ENCODE measurements at regions of chr3 and their contacts with region 1.

Region 1: GRCh38 chr3:12175844-12176453 is 17.2 kb upstream of the TIMP4 start:
- DNase-seq: peak in 1 of 2 experiments; percentile 78
- H3K4me3 ChIP-seq: no peak overlapping the region
- H3K27ac ChIP-seq: no peak overlapping the region
- H3K4me1 ChIP-seq: no peaks in the 10 kb centered on the region
- H3K27me3 ChIP-seq: no peaks in the 10 kb centered on the region
- CTCF ChIP-seq: peak; percentile 88 to 91 (median 91)
- EP300 ChIP-seq: no peak
- POLR2A ChIP-seq: no peak
- RAD21 ChIP-seq: peak; percentile 94 to 96

Region 2: DNA sequence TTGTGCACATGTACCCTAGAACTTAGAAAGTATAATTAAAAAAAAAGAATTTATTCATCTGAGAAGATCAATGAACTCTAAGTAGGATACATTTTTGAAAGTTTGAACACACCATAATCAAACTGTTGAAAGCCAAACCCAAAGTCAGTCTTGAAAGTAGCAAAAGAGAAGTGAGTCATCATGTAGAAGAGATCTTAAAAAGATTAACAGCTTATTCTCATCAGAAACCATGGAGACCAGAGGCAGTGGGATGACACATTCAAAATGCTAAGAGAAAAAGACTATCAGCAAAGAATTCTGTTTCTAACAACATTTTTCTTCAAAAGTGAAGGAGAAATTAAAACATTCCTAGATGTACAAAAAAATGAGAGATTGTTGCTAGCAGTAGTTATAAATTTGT is 78.0 kb before region 1 on chr3:
- CTCF ChIA-PET with region 1: no interaction called
- POLR2A ChIA-PET with region 1: no interaction called
- DNase-seq: no peak
- H3K4me3 ChIP-seq: no peak overlapping the region
- H3K27ac ChIP-seq: no peak overlapping the region
- H3K4me1 ChIP-seq: no peaks in the 10 kb centered on the region
- H3K27me3 ChIP-seq: no peaks in the 10 kb centered on the region
- CTCF ChIP-seq: no peak
- EP300 ChIP-seq: no peak
- POLR2A ChIP-seq: no peak
- RAD21 ChIP-seq: no peak

Region 3: GRCh38 chr3:12186515-12187286 is 10.8 kb after region 1 on chr3:
- CTCF ChIA-PET with region 1: interaction called, 54 read pairs
- POLR2A ChIA-PET with region 1: no interaction called
- DNase-seq: no peak
- H3K4me3 ChIP-seq: no peak overlapping the region
- H3K27ac ChIP-seq: no peak overlapping the region
- H3K4me1 ChIP-seq: no peaks in the 10 kb centered on the region
- H3K27me3 ChIP-seq: no peaks in the 10 kb centered on the region
- CTCF ChIP-seq: no peak
- EP300 ChIP-seq: no peak
- POLR2A ChIP-seq: no peak
- RAD21 ChIP-seq: no peak

Region 4: GRCh38 chr3:12193485-12194165 is 17.7 kb after region 1 on chr3:
- CTCF ChIA-PET with region 1: interaction called, 54 read pairs
- POLR2A ChIA-PET with region 1: no interaction called
- DNase-seq: no peak
- H3K4me3 ChIP-seq: no peak overlapping the region
- H3K27ac ChIP-seq: no peak overlapping the region
- H3K4me1 ChIP-seq: peaks cover 0 to 2% (median 0%) of the 10 kb centered on the region in 4 experiments; a peak in 1 of 7 replicates
- H3K27me3 ChIP-seq: no peaks in the 10 kb centered on the region
- CTCF ChIP-seq: no peak
- EP300 ChIP-seq: no peak
- POLR2A ChIP-seq: no peak
- RAD21 ChIP-seq: no peak